PC-9 (cell line): ENCODE measurements at regions of chr1 and their contacts with region 1.

Region 1: DNA sequence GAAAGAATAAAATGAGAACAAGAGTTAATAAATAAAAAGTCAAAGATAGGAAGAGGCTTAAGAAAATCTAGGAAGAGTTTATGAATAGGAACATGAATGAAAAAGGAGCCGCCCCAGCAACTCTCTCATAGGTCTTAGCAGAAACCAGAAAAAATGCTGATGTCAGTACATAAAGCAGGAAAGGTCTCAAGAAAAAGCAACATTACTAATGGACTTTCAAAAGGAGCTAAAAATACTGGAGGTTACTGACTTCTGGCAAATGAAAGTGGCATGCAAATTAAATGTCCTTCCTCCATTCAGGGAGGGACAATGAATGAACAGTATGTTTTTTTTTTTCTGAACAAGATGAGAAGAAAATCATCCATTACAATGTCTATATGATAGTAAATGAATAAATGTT is 387.6 kb downstream of the BRINP2 start:
- DNase-seq: no peak
- H3K4me3 ChIP-seq: no peak overlapping the region
- H3K27ac ChIP-seq: no peak overlapping the region
- H3K4me1 ChIP-seq: no peaks in the 10 kb centered on the region
- H3K27me3 ChIP-seq: no peaks in the 10 kb centered on the region
- CTCF ChIP-seq: no peak

Region 2: DNA sequence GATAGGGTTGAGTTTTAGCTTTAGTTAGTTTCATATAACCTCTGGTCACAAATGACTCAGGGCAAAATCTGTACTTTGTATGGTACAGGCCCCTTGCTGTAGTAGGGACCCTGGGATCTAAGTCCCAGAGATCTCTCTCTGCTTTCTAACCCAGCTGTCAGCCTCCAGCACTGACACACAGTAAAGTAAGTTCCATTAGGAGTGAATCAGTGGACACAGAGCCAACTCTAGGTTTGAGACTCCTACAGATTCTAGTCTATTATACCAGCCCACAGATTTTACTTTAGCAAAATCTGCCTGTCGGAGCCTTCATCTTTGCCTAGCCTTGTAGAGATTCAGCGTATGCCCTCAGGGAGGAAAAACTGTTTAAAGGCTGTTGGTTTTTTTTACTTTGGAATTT is 1260.0 kb after region 1 on chr1:
- CTCF ChIA-PET with region 1: no interaction called
- POLR2A ChIA-PET with region 1: interaction called, 10 read pairs
- intact Hi-C with region 1: no loop called
- DNase-seq: no peak
- H3K4me3 ChIP-seq: no peak overlapping the region
- H3K27ac ChIP-seq: no peak overlapping the region
- H3K4me1 ChIP-seq: no peaks in the 10 kb centered on the region
- H3K27me3 ChIP-seq: no peaks in the 10 kb centered on the region
- CTCF ChIP-seq: no peak